Panc1 (cell line): ENCODE measurements at regions of chr2 and their contacts with region 1.

Region 1: GRCh38 chr2:9939587-9940485 is 11.7 kb upstream of the GRHL1 start:
- DNase-seq: no peak
- ATAC-seq: no peak
- H3K4me3 ChIP-seq: no peak overlapping the region
- H3K27ac ChIP-seq: no peak overlapping the region
- H3K4me1 ChIP-seq: no peaks in the 10 kb centered on the region
- H3K27me3 ChIP-seq: no peaks in the 10 kb centered on the region; the same call in 1 of the 2 replicates
- CTCF ChIP-seq: no peak

Region 2: GRCh38 chr2:9842487-9843228 is 97.2 kb before region 1 on chr2:
- CTCF ChIA-PET with region 1: no interaction called
- POLR2A ChIA-PET with region 1: interaction called, 16 read pairs
- in situ Hi-C with region 1: no loop called
- intact Hi-C with region 1: no loop called
- DNase-seq: no peak
- ATAC-seq: no peak
- H3K4me3 ChIP-seq: peak overlapping the region; percentile 71 to 97
- H3K27ac ChIP-seq: peak overlapping the region; percentile 85
- H3K4me1 ChIP-seq: peaks cover 11% of the 10 kb centered on the region
- H3K27me3 ChIP-seq: no peaks in the 10 kb centered on the region
- CTCF ChIP-seq: no peak

Region 3: GRCh38 chr2:9909106-9909505 is 30.7 kb before region 1 on chr2:
- CTCF ChIA-PET with region 1: no interaction called
- POLR2A ChIA-PET with region 1: no interaction called
- in situ Hi-C with region 1: no loop called
- intact Hi-C with region 1: no loop called
- DNase-seq: no peak
- ATAC-seq: no peak
- H3K4me3 ChIP-seq: no peak overlapping the region
- H3K27ac ChIP-seq: no peak overlapping the region
- H3K4me1 ChIP-seq: peaks cover 3% of the 10 kb centered on the region
- H3K27me3 ChIP-seq: no peaks in the 10 kb centered on the region
- CTCF ChIP-seq: no peak